PC-3 (cell line): ENCODE measurements at regions of chr14 and their contacts with region 1.

Region 1: GRCh38 chr14:24013654-24014514 is 25.2 kb downstream of the DHRS4L2 start:
- DNase-seq: peak; percentile 89
- ATAC-seq: peak; percentile 95
- H3K4me3 ChIP-seq: no peak overlapping the region
- H3K27ac ChIP-seq: no peak overlapping the region
- H3K4me1 ChIP-seq: no peaks in the 10 kb centered on the region
- H3K27me3 ChIP-seq: no peaks in the 10 kb centered on the region
- CTCF ChIP-seq: peak; percentile 83

Region 2: DNA sequence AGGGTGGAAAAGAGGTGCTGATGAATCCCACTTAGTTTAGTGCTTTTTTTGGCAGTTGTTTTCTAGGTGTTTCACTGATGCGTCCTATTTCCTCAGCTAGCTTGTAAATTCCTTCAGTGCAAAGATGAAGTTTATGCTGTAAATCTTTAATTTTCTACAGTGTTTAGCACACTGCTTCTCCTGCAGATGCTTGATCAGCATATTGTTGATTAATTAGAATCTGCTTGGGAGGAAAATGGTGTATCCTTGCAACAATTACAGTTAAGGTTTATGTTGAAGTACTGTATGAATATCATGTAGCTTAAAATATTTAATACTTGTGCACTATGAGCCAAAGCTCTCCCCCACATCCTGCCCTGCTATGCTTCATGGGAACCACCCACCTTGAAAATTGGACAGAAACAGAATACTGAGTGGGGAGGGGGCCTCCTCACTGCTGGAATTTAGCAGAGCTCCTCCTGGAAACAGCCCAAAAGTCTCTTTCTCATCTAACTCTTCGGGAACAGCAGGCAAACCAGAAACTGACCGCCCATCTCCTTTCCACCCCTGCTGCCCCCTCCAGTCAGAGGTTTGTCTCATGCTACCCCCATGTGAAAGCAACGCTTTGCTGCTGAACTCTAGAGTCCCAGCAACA is 80.7 kb before region 1 on chr14:
- CTCF ChIA-PET with region 1: no interaction called
- POLR2A ChIA-PET with region 1: no interaction called
- intact Hi-C with region 1: no loop called
- DNase-seq: no peak
- ATAC-seq: no peak
- H3K4me3 ChIP-seq: no peak overlapping the region
- H3K27ac ChIP-seq: no peak overlapping the region
- H3K4me1 ChIP-seq: no peaks in the 10 kb centered on the region
- H3K27me3 ChIP-seq: no peaks in the 10 kb centered on the region
- CTCF ChIP-seq: no peak

Region 3: DNA sequence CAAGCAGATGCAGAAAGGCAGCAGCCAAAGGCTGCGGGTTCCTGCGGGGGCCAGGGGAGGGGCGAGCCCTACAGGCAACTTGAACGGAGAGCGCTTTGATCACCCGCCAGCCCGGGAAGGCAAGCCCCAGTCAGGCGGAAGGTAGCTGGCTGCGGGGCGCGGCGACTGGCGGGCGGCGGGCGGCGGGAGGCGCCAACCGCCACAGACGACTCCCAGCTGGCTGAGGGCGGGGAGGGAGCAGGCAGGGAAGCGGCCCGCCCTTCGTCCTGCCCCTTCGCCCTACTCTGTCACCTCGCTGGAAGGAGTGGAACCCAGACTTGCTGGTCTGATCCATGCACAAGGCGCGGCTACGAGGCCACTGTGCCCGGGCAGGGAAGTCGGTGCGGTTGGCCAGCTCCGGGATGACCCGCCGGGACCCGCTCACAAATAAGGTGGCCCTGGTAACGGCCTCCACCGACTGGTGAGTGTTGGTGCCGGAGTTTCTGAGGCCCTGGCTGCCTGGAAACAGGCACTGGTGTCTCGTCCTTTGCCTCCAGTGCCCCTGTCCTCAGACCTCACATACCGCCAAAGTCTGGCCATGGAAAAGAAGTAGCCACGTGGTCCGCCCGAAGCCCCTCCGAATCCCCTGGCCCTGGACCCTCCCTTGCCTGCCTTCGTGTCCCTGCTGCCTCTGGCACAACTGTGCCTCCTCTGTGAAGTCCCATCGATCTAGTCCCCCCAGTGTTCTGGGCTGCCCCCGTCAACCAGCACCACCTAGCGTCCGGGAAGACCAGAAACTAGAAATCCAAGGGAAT is 22.5 kb after region 1 on chr14:
- CTCF ChIA-PET with region 1: no interaction called
- POLR2A ChIA-PET with region 1: no interaction called
- intact Hi-C with region 1: loop called (anchors 1 kb)
- DNase-seq: peak; percentile 70
- ATAC-seq: peak; percentile 97
- H3K4me3 ChIP-seq: peak overlapping the region; percentile 71
- H3K27ac ChIP-seq: no peak overlapping the region
- H3K4me1 ChIP-seq: no peaks in the 10 kb centered on the region
- H3K27me3 ChIP-seq: no peaks in the 10 kb centered on the region
- CTCF ChIP-seq: peak; percentile 85

Region 4: GRCh38 chr14:24108336-24108874 is 94.5 kb after region 1 on chr14:
- CTCF ChIA-PET with region 1: no interaction called
- POLR2A ChIA-PET with region 1: no interaction called
- intact Hi-C with region 1: loop called (anchors 5 kb)
- DNase-seq: no peak
- ATAC-seq: no peak; the same call in 1 of the 2 replicates
- H3K4me3 ChIP-seq: no peak overlapping the region
- H3K27ac ChIP-seq: no peak overlapping the region
- H3K4me1 ChIP-seq: peaks cover 9% of the 10 kb centered on the region
- H3K27me3 ChIP-seq: no peaks in the 10 kb centered on the region
- CTCF ChIP-seq: no peak

Region 5: DNA sequence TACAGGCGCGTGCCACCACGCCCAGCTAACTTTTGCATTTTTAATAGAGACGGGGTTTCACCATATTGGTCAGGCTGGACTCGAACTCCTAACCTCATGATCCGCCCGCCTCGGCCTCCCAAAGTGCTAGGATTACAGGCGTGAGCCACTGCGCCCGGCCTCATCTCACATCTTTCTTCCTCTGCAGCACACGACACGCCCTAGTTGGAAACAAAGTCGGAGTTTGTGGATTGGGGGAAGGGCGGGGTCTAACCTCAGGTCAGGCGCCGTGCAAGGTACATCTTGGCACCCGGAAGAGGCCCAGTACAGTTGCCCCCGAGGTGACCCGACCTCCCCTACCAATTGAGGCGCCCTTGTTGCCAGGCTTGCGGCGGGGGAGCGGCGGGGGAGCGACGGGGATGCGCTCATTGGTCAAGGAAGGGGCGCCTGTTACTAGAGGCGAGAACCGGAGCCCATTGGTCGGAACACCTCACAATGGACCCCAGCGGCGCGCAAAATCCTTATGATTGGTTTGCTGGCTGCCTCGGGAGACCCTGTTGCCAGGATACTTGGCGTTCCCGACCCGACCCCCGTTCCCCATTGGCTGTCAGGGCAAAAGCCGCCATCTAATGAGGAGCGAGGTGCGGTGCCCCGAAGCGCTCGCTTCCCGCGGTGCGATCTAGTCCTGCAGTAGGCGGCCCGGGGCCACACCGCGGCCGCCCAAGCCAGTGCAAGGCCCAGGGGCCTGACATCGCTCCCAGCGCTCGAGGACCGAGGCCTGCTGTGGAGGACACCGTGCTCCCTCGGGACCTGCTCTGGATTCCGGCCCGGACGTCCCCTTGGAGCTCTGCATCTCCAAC is 157.8 kb after region 1 on chr14 and contains the start of gene REC8:
- CTCF ChIA-PET with region 1: no interaction called
- POLR2A ChIA-PET with region 1: no interaction called
- intact Hi-C with region 1: no loop called
- DNase-seq: no peak
- ATAC-seq: no peak
- H3K4me3 ChIP-seq: no peak within 1 kb of the TSS
- H3K27ac ChIP-seq: no peak within 1 kb of the TSS
- H3K4me1 ChIP-seq: no peaks in the 10 kb centered on the region
- H3K27me3 ChIP-seq: no peaks in the 10 kb centered on the region
- CTCF ChIP-seq: no peak
- total RNA-seq, gene REC8: 1.9 and 5.7 TPM in 2 replicates